Activated naive CD4-positive, alpha-beta T cell treated with anti-CD3 and anti-CD28 coated beads for 36 hours (primary cell): ENCODE measurements at regions of chr21 and their contacts with region 1.

Region 1: DNA sequence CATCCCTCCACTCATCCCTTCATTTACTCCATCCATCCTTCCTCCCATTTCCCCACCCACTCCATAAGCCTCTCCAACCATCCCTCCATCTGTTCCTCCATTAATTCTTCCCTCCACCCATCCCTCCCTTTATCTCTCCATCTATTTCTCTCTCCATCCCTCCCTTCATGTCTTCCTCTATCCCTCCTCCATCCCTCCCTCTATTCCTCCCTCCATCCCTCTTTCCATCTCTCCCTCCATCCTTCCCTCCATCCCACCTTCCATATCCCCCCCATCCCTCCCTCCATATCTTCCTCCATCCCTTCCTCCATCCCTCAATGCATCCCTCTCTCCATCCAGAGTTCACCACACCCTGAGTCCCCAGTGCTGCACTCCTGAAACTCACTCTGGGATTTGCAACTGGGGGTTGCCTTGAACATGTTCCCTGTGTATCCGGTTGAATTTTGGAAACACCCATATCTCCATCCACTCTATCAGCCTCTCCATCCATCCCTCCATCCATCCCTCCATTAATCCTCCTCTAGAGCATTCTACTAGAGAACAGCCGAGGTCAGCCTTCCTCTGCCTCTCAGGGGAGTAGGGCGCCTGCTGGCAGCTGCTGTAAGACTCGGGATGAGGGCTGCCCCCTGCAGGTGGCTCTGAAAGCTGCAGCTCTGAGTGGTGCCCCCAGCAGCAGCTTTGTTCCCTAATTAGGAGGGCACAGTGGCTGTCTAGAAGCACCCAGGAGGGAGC is 39.4 kb downstream of the ABCG1 start:
- DNase-seq: peak; percentile 89
- H3K4me3 Mint-ChIP-seq: no peak overlapping the region
- H3K27ac Mint-ChIP-seq: no peak overlapping the region
- H3K4me1 Mint-ChIP-seq: peaks cover 17% of the 10 kb centered on the region
- H3K27me3 Mint-ChIP-seq: no peaks in the 10 kb centered on the region

Region 2: GRCh38 chr21:41733949-41734645 is 524.2 kb before region 1 on chr21:
- CTCF ChIA-PET with region 1: no interaction called
- intact Hi-C with region 1: no loop called
- DNase-seq: no peak
- H3K4me3 Mint-ChIP-seq: no peak overlapping the region
- H3K27ac Mint-ChIP-seq: peak overlapping the region; percentile 58
- H3K4me1 Mint-ChIP-seq: no peaks in the 10 kb centered on the region
- H3K27me3 Mint-ChIP-seq: peaks cover 14% of the 10 kb centered on the region

Region 3: GRCh38 chr21:42145569-42146272 is 112.6 kb before region 1 on chr21:
- CTCF ChIA-PET with region 1: interaction called, 111 read pairs
- intact Hi-C with region 1: loop called (anchors 1 kb)
- DNase-seq: peak; percentile 77
- H3K4me3 Mint-ChIP-seq: no peak overlapping the region
- H3K27ac Mint-ChIP-seq: no peak overlapping the region
- H3K4me1 Mint-ChIP-seq: peaks cover 7% of the 10 kb centered on the region
- H3K27me3 Mint-ChIP-seq: no peaks in the 10 kb centered on the region

Region 4: DNA sequence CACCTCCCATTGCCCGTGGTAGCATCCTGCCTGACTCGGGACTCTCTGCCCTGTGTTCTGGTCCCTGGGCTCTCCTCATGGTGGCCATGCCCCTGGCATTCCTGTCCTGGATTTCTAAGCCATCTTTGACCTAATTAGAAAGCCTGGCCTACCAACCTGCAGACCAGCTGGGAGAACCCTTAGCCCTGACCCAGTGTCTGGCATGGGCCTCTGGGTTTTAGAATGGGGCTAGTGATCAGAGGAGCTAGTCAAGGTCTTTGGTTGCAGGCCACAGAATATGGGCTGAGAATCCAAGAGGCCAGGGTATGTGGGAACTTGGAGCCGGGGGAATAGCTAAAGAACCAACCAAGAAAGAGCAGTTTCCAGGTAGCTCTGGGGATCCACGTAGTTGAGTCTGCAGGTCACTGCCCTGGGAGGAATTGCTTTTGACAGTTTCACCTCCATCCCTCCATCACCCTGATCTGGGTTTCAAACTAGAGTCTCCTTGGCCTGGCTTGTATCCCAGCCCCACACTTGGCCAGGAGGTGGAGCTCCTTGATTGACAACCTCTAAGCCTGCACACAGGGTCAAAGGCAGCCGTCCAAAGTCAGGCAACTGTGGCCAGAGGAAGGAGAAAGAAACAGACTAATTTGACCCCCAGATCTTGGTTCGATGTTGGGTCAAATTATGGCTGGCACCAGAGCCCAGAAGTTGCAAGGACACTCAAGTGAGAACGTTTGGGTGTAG is 94.1 kb before region 1 on chr21:
- CTCF ChIA-PET with region 1: interaction called, 110 read pairs
- intact Hi-C with region 1: loop called (anchors 1 kb)
- DNase-seq: peak; percentile 83
- H3K4me3 Mint-ChIP-seq: no peak overlapping the region
- H3K27ac Mint-ChIP-seq: no peak overlapping the region
- H3K4me1 Mint-ChIP-seq: peaks cover 33% of the 10 kb centered on the region
- H3K27me3 Mint-ChIP-seq: peaks cover 1% of the 10 kb centered on the region

Region 5: GRCh38 chr21:42199488-42200458 is 58.5 kb before region 1 on chr21:
- CTCF ChIA-PET with region 1: interaction called, 12 read pairs
- intact Hi-C with region 1: loop called (anchors 1 kb)
- DNase-seq: peak; percentile 43
- H3K4me3 Mint-ChIP-seq: no peak overlapping the region
- H3K27ac Mint-ChIP-seq: peak overlapping the region; percentile 79
- H3K4me1 Mint-ChIP-seq: peaks cover 49% of the 10 kb centered on the region
- H3K27me3 Mint-ChIP-seq: no peaks in the 10 kb centered on the region

Region 6: DNA sequence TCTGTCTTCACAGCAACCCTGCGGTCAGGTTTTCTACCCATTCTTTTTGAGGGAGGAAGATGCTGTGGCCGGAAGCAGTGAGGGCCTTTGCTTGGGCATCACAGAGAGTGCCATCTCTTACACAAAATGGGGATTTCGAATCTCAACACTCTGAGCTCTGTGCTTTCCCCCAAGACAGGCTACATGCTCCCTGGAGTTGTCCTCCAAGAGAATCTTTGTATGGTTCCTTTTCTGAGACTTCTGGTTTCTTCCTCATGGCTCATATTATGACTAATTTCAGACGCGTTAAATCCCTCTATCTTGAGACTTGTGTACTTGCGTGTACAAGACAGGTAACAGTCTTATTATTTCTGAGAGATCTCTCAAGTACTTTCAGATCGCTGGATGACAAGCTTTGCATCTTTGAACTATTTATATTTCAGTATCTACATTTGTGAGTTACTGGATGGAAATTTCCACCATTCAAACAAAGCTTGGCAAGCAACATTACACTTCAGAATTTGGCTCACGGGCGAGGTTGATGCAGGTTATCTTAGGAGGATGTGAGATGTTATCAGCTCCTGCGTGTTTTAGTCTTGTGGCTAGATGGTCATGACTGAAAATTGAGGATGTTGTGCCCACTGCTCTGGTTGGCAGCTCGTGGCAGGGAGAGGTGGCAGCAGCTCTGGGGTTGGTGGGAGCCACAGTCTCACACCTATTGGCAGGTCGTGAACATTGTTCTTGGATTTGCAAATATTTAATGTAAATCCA is 20.0 kb before region 1 on chr21:
- CTCF ChIA-PET with region 1: interaction called, 44 read pairs
- intact Hi-C with region 1: loop called (anchors 1 kb)
- DNase-seq: peak; percentile 66
- H3K4me3 Mint-ChIP-seq: peak overlapping the region; percentile 13
- H3K27ac Mint-ChIP-seq: peak overlapping the region; percentile 95
- H3K4me1 Mint-ChIP-seq: peaks cover 53% of the 10 kb centered on the region
- H3K27me3 Mint-ChIP-seq: no peaks in the 10 kb centered on the region

Region 7: DNA sequence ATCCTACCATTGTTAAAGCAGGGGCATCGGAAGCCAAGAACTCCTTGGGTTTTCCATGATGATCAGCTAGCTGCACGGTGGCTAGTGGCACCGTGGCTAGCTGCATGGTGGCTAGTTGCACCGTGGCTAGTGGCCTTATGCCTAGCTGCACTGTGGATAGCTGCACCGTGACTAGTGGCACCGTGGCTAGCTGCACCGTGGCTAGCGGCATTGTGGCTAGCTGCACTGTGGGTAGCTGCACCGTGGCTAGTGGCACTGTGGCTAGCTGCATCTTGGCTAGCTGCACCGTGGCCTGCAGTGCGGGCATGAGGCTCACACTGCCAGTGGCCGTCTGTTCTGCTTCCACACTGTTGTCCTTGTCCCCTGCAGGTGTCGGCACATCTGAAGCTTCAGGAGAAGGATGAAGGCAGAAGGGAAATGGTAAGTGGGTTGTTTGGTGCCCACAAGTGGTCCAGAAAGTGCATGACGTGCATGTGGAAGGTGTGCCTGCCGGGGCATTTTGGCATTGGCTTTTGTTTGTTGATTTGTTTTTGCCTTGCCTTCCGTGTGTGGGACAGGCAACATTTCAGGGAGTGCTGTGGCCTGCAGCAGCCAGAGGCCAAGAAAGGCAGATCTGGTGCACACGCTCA is 18.3 kb after region 1 on chr21:
- CTCF ChIA-PET with region 1: interaction called, 41 read pairs
- intact Hi-C with region 1: no loop called
- DNase-seq: no peak
- H3K4me3 Mint-ChIP-seq: no peak overlapping the region
- H3K27ac Mint-ChIP-seq: no peak overlapping the region
- H3K4me1 Mint-ChIP-seq: no peaks in the 10 kb centered on the region
- H3K27me3 Mint-ChIP-seq: no peaks in the 10 kb centered on the region